Sigmoid colon (tissue), 7 donors: ENCODE measurements at regions of chr2 and their contacts with region 1.

Region 1: DNA sequence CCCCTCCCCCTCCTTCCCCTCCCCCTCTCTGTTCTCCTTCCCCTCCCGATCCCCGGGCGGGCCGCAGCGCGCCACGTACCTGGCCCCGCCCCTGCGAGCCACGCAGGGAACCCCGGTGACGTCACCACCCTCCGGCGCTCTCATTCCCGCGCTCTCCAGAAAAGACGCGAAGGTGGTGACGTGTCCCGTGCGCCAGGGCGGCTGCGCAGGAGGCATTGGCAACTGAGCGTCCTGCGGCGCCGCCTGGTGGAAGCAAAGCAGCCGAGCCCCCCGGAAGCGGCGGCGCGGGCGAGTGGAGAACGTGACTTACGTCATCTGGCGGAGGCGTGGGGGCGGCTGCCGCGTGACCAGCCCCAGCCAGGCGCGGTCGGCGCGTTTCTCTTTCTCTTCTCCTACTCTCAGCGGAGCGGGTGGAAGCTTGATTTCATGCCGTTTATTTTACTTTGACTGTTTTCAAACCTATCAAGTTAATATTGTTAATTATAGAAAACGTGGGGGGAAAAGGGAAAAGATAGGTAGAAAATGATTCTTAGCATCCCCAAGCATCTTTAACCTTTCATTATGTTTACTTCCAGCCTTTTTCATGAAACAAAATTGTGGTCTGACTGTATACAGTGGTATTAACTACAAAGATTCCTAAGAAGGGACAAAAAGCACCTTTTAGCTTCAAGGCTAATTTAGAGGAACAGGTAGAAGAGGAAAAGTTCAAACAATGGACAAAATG is 48.1 kb downstream of the C2orf42 start:
- DNase-seq: peak; percentile 100
- H3K4me3 ChIP-seq: peak overlapping the region; percentile 56 to 78 (median 72)
- H3K27ac ChIP-seq: peak overlapping the region; percentile 97 to 100 (median 99)
- H3K4me1 ChIP-seq: peaks cover 0 to 24% (median 20%) of the 10 kb centered on the region in 4 donors
- H3K27me3 ChIP-seq: no peaks in the 10 kb centered on the region
- CTCF ChIP-seq: peak; percentile 85 to 100 (median 98)
- EP300 ChIP-seq: peak in 3 of 4 donors; percentile 52 to 95 (median 74)
- POLR2A ChIP-seq: peak; percentile 92 to 94

Region 2: GRCh38 chr2:69829256-69830046 is 313.3 kb before region 1 on chr2 and contains the start of gene GMCL1:
- intact Hi-C with region 1: loop called (anchors 10 kb)
- DNase-seq: peak; percentile 99
- H3K4me3 ChIP-seq: peak within 1 kb of the TSS; percentile 86 to 94 (median 88)
- H3K27ac ChIP-seq: peak within 1 kb of the TSS; percentile 90 to 95 (median 94)
- H3K4me1 ChIP-seq: peaks cover 0 to 31% (median 23%) of the 10 kb centered on the region in 4 donors
- H3K27me3 ChIP-seq: no peaks in the 10 kb centered on the region
- CTCF ChIP-seq: no peak
- EP300 ChIP-seq: peak in 1 of 4 donors; percentile 40
- POLR2A ChIP-seq: peak; percentile 62 to 68
- total RNA-seq, gene GMCL1: 10.5 to 15.3 (median 12.9) TPM

Region 3: GRCh38 chr2:69907216-69907615 is 235.5 kb before region 1 on chr2:
- intact Hi-C with region 1: no loop called
- DNase-seq: no peak
- H3K4me3 ChIP-seq: no peak overlapping the region
- H3K27ac ChIP-seq: no peak overlapping the region
- H3K4me1 ChIP-seq: peaks cover 0 to 6% (median 1%) of the 10 kb centered on the region in 4 donors
- H3K27me3 ChIP-seq: no peaks in the 10 kb centered on the region
- CTCF ChIP-seq: no peak
- EP300 ChIP-seq: no peak
- POLR2A ChIP-seq: no peak

Region 4: DNA sequence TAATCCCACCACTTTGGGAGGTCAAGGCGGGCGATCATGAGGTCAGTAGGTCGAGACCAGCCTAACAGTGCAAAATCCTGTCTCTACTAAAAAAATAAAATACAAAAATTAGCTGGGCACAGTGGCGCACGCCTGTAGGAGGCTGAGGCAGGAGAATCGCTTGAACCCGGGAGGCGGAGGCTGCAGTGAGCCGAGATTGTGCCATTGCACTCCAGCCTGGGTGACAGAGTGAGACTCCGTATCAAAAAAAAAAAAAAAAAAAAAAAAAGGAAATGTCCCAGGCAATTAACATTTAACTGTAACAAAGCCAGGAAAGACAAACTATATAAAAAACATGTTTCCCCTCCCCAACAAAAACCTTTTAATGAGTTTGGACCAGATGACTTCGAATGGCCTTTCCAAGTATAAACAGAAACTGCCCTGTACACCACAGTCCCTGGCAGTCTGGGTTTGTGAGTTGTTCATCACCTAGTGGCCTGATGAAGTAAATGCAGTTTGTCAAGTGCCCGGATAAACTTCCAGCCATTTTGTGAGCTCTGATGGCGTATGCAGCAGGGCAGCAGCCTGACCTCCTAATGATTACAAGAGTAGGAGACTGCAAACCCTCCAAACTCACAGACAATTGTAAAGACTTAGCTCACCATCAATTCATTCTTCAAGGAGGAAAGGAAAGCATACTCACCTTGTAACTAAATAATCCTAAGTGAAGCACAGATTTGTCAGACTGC is 72.0 kb before region 1 on chr2:
- intact Hi-C with region 1: loop called (anchors 1 kb)
- DNase-seq: peak; percentile 89
- H3K4me3 ChIP-seq: no peak overlapping the region
- H3K27ac ChIP-seq: peak overlapping the region; percentile 77 to 79 (median 78)
- H3K4me1 ChIP-seq: peaks cover 0 to 22% (median 18%) of the 10 kb centered on the region in 4 donors
- H3K27me3 ChIP-seq: no peaks in the 10 kb centered on the region
- CTCF ChIP-seq: peak; percentile 64 to 94 (median 80)
- EP300 ChIP-seq: no peak
- POLR2A ChIP-seq: no peak

Region 5: GRCh38 chr2:70124983-70125480 is 17.7 kb before region 1 on chr2:
- intact Hi-C with region 1: loop called (anchors 1 kb)
- DNase-seq: peak; percentile 86
- H3K4me3 ChIP-seq: peak overlapping the region; percentile 54 to 65 (median 56)
- H3K27ac ChIP-seq: peak overlapping the region; percentile 94 to 97 (median 96)
- H3K4me1 ChIP-seq: peaks cover 0 to 26% (median 16%) of the 10 kb centered on the region in 4 donors
- H3K27me3 ChIP-seq: no peaks in the 10 kb centered on the region
- CTCF ChIP-seq: no peak
- EP300 ChIP-seq: peak in 1 of 4 donors; percentile 26
- POLR2A ChIP-seq: peak in 1 of 2 donors; percentile 18

Region 6: DNA sequence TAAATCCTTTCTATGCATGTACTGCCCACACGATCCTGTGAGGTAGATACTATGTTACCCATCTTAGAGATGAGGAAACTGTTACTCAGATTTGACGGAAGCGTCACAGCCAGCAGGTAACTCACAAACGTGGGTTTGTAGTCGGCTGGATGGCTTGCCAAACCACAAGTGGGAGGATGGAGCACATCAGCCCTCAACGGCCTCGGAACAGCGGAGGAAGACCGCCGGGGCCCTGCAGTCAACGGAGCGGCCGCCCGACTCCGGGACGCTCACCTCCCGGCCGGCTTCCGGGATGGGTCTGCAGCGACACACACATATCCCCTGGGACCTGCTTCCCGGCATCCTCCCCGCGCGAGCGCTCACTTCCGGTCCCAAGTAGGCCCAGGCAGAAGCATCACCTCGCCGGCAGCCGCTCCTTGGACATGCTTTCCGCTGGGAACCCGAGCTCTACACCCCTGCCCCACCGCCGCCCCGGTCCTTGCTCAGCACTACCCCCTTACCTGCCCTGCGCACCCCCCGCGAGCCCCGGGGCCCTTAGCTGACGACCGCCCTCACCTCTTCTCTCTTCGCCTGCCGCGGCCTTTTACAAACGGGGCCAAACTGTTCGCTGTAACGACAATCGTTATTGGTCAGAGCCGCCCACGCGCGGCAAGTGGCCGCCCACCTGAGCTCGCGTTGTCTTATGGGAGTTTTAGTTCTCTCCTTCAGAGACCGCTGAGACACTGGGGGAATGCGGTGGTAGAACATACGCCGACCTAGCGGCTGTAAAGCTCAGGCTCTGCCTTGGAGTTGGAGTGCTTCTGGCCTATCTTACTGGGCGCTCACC is 47.9 kb after region 1 on chr2 and contains the start of gene C2orf42:
- intact Hi-C with region 1: loop called (anchors 2 kb)
- DNase-seq: peak; percentile 98
- H3K4me3 ChIP-seq: peak within 1 kb of the TSS; percentile 77 to 91 (median 81)
- H3K27ac ChIP-seq: peak within 1 kb of the TSS; percentile 95 to 98 (median 96)
- H3K4me1 ChIP-seq: peaks cover 0 to 11% (median 5%) of the 10 kb centered on the region in 4 donors
- H3K27me3 ChIP-seq: no peaks in the 10 kb centered on the region
- CTCF ChIP-seq: no peak
- EP300 ChIP-seq: peak in 1 of 4 donors; percentile 18
- POLR2A ChIP-seq: peak; percentile 98 to 99
- total RNA-seq, gene C2orf42: 8.8 to 24.3 (median 21.8) TPM

Region 7: GRCh38 chr2:70226781-70227180 is 84.0 kb after region 1 on chr2:
- intact Hi-C with region 1: no loop called
- DNase-seq: no peak
- H3K4me3 ChIP-seq: no peak overlapping the region
- H3K27ac ChIP-seq: no peak overlapping the region
- H3K4me1 ChIP-seq: no peaks in the 10 kb centered on the region
- H3K27me3 ChIP-seq: no peaks in the 10 kb centered on the region
- CTCF ChIP-seq: no peak
- EP300 ChIP-seq: no peak
- POLR2A ChIP-seq: no peak